Head of caudate nucleus (tissue), 42 donors: ENCODE measurements at regions of chr11 and their contacts with region 1.

Region 1: DNA sequence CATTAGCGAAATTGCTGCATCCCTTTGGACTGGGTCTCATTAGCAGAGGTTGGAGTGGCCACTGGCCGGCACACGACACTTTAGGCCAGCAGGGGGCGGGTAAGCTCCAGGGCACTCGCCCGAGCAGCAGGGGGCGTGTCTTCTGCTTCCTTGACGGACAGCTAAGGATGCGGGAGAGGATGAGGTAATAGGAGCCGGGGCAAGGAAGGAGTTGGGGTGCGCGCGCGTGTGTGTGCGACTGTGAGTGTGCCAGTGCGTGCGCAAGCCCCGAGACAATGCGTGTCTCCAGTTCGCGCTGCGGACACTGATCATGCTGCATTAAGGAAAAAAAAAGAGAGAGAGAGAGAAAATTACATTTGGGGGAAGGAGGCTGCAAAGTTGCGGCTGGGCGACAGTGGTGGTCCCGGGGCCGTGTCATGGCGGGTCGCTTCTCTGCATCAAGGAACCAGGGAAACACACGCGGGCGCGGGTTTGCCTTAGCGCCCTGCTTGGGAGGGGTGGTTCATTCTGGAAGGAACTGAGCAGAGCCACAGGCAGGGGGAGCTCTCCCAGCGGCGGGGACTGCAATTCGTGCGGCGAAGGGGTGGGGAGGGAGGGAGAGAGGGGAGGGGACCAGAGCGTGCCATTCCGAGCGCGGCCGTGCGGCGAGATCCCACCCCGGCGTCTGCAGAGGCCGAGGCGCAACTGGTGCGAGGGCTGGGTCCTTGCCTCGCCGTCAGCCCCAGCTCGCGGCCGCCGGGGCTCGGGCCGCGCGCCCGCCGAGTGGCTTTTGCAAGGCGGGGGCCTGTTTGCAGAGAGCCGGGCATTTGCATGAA is at the start of gene DTX4:
- DNase-seq: peak; percentile 91 to 98 (median 95)

Region 2: DNA sequence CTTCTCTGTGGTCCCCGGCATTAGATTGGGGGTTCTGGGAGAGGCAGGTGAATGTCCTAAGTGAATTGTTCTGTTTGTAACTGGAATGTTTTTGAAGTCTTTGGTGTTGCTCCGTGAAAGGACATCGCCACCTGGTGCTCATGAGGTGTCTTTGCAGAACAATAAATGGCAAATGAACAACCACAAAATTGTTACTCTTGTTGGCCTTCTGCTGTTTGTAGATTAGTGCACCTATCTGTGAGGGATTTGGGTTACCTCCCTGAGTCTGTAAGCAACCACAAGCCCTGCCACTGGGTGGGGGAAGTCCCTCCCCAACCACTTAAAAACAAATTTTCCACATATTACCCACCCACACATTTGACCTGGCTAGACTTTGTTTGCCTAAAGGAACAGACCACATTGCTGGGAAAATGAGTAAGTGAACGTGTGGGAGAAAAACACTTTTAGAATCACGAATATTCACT is 36.3 kb after region 1 on chr11:
- intact Hi-C with region 1: loop called (anchors 2 kb)
- DNase-seq: peak in 36 of 42 donors; percentile 30 to 79 (median 49)

Region 3: DNA sequence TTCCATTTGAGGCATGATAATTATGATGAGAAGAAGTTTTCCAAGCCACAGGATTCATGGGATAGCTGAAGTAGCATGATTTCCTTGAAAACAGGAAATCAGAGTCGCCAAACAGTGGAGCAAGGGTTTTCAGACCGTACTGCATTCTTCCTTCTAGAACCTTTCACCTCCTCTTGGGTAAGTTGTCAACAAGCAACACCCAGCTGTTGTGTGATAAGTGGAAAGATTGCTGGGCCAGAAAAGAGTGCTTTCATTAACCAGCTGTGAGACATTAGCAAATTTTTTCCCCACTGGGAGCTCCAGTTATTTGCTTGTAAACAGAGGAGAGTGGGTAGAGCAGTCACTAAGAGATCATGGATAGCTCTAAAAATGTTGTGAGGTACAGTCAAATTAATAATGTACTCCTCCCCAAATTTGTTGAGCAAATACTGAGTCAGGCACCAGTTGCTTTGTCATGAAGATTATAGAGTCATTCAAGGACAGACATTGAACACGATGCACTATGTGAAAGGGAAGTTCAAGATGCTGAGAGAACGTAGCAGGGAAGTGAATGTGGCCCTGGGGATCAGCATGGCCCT is 52.7 kb after region 1 on chr11:
- intact Hi-C with region 1: no loop called
- DNase-seq: no peak

Region 4: GRCh38 chr11:59283825-59284772 is 112.4 kb after region 1 on chr11:
- intact Hi-C with region 1: loop called (anchors 5 kb)
- DNase-seq: peak in 34 of 42 donors; percentile 16 to 76 (median 48)